GM12878 (cell line): ENCODE measurements at regions of chr10 and their contacts with region 1.

Region 1: GRCh38 chr10:77636282-77636966 is 1.2 kb downstream of the KCNMA1 start:
- DNase-seq: no peak
- ATAC-seq: peak; percentile 27
- H3K4me3 ChIP-seq: no peak overlapping the region
- H3K27ac ChIP-seq: no peak overlapping the region
- H3K4me1 ChIP-seq: no peaks in the 10 kb centered on the region
- H3K27me3 ChIP-seq: no peaks in the 10 kb centered on the region; a peak in 1 of 4 replicates
- CTCF ChIP-seq: no peak
- EP300 ChIP-seq: no peak
- POLR2A ChIP-seq: no peak
- RAD21 ChIP-seq: no peak

Region 2: DNA sequence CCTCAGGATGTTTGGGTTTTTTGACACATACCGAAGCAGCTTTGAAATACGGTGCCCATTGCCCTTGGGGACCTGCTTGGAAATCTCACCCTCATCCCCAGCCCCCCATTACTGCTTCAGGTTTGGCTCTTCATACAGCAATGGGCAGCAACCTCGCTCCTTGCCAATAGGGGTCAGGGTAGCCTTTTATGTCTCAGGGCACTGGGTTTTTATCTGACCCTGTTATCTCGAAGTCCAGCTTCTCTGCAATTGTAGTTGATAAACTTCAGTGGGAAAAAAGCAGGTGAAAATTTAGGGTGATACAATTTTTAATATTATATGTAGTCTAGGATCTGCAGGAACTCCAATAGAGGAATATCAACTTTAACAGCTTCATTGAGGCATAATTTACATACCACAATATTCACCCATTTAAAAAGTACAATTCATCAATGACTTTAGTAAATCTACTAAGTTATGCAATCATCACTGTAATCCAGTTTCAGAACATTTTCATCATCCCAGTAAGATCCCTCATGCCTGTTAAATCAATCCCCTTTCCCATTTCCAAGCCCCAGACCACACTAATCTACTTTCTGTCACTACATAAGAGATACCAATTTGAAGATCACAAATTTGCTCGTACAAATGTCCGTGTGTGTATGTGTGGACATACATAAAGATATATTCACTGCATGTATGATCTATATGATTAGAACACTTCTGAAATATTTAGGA is 385.0 kb before region 1 on chr10:
- CTCF ChIA-PET with region 1: interaction called, 126 read pairs
- POLR2A ChIA-PET with region 1: no interaction called
- RAD21 ChIA-PET with region 1: interaction called, 22 read pairs
- SMC1A ChIA-PET with region 1: interaction called, 47 read pairs
- in situ Hi-C with region 1: loop called (anchors 5 kb)
- intact Hi-C with region 1: loop called (anchors 1 kb)
- DNase-seq: no peak
- ATAC-seq: peak; percentile 94
- H3K4me3 ChIP-seq: no peak overlapping the region
- H3K27ac ChIP-seq: no peak overlapping the region
- H3K4me1 ChIP-seq: no peaks in the 10 kb centered on the region
- H3K27me3 ChIP-seq: no peaks in the 10 kb centered on the region
- CTCF ChIP-seq: peak; percentile 59 to 76 (median 64)
- EP300 ChIP-seq: no peak
- POLR2A ChIP-seq: no peak
- RAD21 ChIP-seq: peak; percentile 66

Region 3: GRCh38 chr10:77419979-77420378 is 216.4 kb before region 1 on chr10:
- CTCF ChIA-PET with region 1: no interaction called
- POLR2A ChIA-PET with region 1: no interaction called
- RAD21 ChIA-PET with region 1: no interaction called
- SMC1A ChIA-PET with region 1: no interaction called
- in situ Hi-C with region 1: no loop called
- intact Hi-C with region 1: no loop called
- DNase-seq: no peak
- ATAC-seq: no peak
- H3K4me3 ChIP-seq: no peak overlapping the region
- H3K27ac ChIP-seq: no peak overlapping the region
- H3K4me1 ChIP-seq: no peaks in the 10 kb centered on the region
- H3K27me3 ChIP-seq: no peaks in the 10 kb centered on the region; a peak in 1 of 4 replicates
- CTCF ChIP-seq: no peak
- EP300 ChIP-seq: no peak
- POLR2A ChIP-seq: no peak
- RAD21 ChIP-seq: no peak

Region 4: DNA sequence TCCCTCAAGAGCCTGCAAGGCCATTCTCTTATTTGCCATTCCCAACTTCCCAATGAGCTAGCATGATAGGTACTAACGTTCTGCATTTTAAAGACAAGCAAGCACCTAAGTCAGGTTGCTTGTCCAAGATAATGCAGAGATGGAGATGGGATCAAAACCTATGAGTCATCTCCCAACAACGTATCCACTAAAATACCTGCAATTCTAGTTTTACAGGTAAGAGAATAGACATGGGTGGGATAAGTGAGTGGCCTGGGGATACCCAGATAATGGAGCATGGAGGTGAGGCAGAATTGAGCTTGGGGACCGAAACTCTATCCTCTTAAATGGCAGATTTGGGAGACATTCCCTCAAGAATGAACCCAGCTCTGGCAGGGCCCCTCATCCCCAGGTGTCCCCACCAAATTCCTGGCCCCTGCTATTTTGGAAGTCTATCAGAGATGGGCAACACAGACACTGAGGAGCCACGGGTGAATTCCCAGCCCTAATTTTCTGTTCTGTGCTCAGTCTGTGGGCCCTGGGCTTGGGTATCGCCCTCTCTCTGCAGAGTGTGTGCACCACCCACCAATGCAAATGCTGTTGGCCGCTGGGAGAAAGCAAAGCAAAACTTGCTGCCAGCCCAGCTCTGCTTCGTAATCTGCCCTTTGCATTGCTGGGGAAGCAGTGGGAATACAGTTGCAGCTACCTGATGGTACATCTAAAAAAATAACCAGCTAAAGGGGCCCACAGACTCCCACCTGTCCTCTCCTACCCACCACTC is 97.1 kb before region 1 on chr10:
- CTCF ChIA-PET with region 1: interaction called, 3 read pairs
- POLR2A ChIA-PET with region 1: interaction called, 3 read pairs
- RAD21 ChIA-PET with region 1: interaction called, 3 read pairs
- SMC1A ChIA-PET with region 1: interaction called, 11 read pairs
- in situ Hi-C with region 1: no loop called
- intact Hi-C with region 1: no loop called
- DNase-seq: no peak
- ATAC-seq: peak; percentile 31; the same call in 1 of the 3 replicates
- H3K4me3 ChIP-seq: no peak overlapping the region
- H3K27ac ChIP-seq: no peak overlapping the region
- H3K4me1 ChIP-seq: no peaks in the 10 kb centered on the region
- H3K27me3 ChIP-seq: no peaks in the 10 kb centered on the region
- CTCF ChIP-seq: no peak
- EP300 ChIP-seq: no peak
- POLR2A ChIP-seq: no peak
- RAD21 ChIP-seq: no peak

Region 5: GRCh38 chr10:77613476-77614130 is 22.8 kb before region 1 on chr10:
- CTCF ChIA-PET with region 1: interaction called, 10 read pairs
- POLR2A ChIA-PET with region 1: interaction called, 15 read pairs
- RAD21 ChIA-PET with region 1: interaction called, 37 read pairs
- SMC1A ChIA-PET with region 1: interaction called, 27 read pairs
- in situ Hi-C with region 1: no loop called
- intact Hi-C with region 1: no loop called
- DNase-seq: no peak
- ATAC-seq: peak; percentile 83
- H3K4me3 ChIP-seq: no peak overlapping the region
- H3K27ac ChIP-seq: no peak overlapping the region
- H3K4me1 ChIP-seq: peaks cover 3% of the 10 kb centered on the region; the same call in 1 of the 2 replicates
- H3K27me3 ChIP-seq: no peaks in the 10 kb centered on the region; a peak in 1 of 4 replicates
- CTCF ChIP-seq: no peak
- EP300 ChIP-seq: peak; percentile 46 to 48; a peak in 3 of 4 replicates
- POLR2A ChIP-seq: no peak
- RAD21 ChIP-seq: no peak